GM12878 (cell line): ENCODE measurements at regions of chr2 and their contacts with region 1.

Region 1: DNA sequence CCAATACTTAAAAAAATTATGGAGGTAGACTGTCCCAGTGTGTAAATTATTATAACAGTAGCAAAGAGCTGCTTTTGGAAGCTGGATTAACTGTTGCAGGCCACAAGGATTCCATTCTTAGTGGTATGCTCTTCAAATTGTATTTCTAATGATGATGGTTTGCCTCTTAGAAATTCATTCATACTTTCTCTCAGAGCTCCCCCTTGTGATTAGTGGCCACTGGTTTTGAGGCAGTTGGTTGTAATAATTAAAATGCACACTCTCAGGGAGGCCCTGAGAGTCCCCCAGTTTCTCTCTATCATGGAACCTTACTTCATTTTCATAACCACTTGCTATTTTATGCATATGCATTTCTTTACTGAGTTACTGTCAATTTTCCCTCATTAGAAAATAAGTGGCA is 122.5 kb downstream of the PLA2R1 start:
- DNase-seq: peak; percentile 32
- ATAC-seq: peak; percentile 94
- H3K4me3 ChIP-seq: no peak overlapping the region
- H3K27ac ChIP-seq: no peak overlapping the region
- H3K4me1 ChIP-seq: 0 out of 2 replicates have a peak, but pooled peaks cover 1% of the 10 kb centered on the region
- H3K27me3 ChIP-seq: no peaks in the 10 kb centered on the region
- CTCF ChIP-seq: peak; percentile 57 to 82 (median 62); a peak in 5 of 6 replicates
- EP300 ChIP-seq: no peak
- POLR2A ChIP-seq: no peak
- RAD21 ChIP-seq: peak; percentile 88

Region 2: DNA sequence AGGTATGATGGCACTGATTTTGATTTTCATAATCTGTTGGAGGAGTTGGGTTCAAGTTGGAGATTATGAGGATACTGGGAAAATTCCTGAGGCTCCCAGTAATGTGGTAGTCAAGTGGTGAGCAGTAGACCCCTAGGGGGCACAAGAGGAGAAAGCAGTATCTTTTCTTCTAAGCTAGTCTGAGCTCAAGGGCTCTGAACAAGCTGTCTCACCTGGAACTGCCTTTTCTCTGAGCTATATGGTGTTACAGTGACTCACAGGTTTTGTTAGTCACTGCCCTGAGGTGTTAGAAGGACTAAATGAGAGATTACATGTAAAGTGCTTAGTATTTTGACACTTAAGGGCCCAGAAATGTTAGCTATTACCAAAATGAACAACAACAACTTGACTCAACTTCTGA is 184.2 kb before region 1 on chr2:
- CTCF ChIA-PET with region 1: interaction called, 10 read pairs
- POLR2A ChIA-PET with region 1: no interaction called
- RAD21 ChIA-PET with region 1: interaction called, 10 read pairs
- SMC1A ChIA-PET with region 1: interaction called, 7 read pairs
- in situ Hi-C with region 1: no loop called
- intact Hi-C with region 1: no loop called
- DNase-seq: no peak
- ATAC-seq: peak; percentile 65
- H3K4me3 ChIP-seq: no peak overlapping the region
- H3K27ac ChIP-seq: no peak overlapping the region
- H3K4me1 ChIP-seq: no peaks in the 10 kb centered on the region
- H3K27me3 ChIP-seq: no peaks in the 10 kb centered on the region
- CTCF ChIP-seq: peak in 1 of 3 experiments; percentile 17; a peak in 1 of 6 replicates
- EP300 ChIP-seq: no peak
- POLR2A ChIP-seq: no peak
- RAD21 ChIP-seq: no peak

Region 3: DNA sequence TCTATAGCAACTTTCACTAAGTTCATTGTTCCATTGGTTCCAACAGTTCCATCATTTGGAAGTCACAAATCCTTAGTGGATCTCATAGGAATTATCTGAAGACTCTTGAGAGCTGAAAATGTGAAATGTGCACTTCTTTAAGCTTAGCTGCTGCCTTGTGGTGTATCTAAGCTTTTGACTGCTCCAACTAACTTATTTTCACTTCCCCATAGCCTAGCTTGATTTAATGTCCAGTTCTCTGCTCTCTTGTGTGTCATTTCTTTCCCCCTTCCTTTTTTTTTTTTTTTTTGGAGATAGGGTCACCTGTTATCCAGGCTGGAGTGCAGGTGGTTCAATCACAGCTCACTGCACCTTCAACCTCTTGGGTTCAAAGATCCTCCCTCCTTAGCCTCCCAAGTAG is 107.1 kb before region 1 on chr2:
- CTCF ChIA-PET with region 1: interaction called, 4 read pairs
- POLR2A ChIA-PET with region 1: no interaction called
- RAD21 ChIA-PET with region 1: interaction called, 10 read pairs
- SMC1A ChIA-PET with region 1: interaction called, 6 read pairs
- in situ Hi-C with region 1: no loop called
- intact Hi-C with region 1: no loop called
- DNase-seq: no peak
- ATAC-seq: peak; percentile 68
- H3K4me3 ChIP-seq: no peak overlapping the region
- H3K27ac ChIP-seq: no peak overlapping the region
- H3K4me1 ChIP-seq: no peaks in the 10 kb centered on the region
- H3K27me3 ChIP-seq: no peaks in the 10 kb centered on the region
- CTCF ChIP-seq: no peak
- EP300 ChIP-seq: no peak
- POLR2A ChIP-seq: no peak
- RAD21 ChIP-seq: no peak

Region 4: GRCh38 chr2:159867567-159868361 is 72.2 kb before region 1 on chr2:
- CTCF ChIA-PET with region 1: interaction called, 3 read pairs
- POLR2A ChIA-PET with region 1: interaction called, 3 read pairs
- RAD21 ChIA-PET with region 1: interaction called, 5 read pairs
- SMC1A ChIA-PET with region 1: interaction called, 12 read pairs
- in situ Hi-C with region 1: no loop called
- intact Hi-C with region 1: loop called (anchors 5 kb)
- DNase-seq: no peak
- ATAC-seq: no peak
- H3K4me3 ChIP-seq: no peak overlapping the region
- H3K27ac ChIP-seq: no peak overlapping the region
- H3K4me1 ChIP-seq: no peaks in the 10 kb centered on the region
- H3K27me3 ChIP-seq: no peaks in the 10 kb centered on the region
- CTCF ChIP-seq: no peak
- EP300 ChIP-seq: no peak
- POLR2A ChIP-seq: no peak
- RAD21 ChIP-seq: no peak

Region 5: GRCh38 chr2:159904127-159904958 is 35.6 kb before region 1 on chr2:
- CTCF ChIA-PET with region 1: interaction called, 72 read pairs
- POLR2A ChIA-PET with region 1: interaction called, 840 read pairs
- RAD21 ChIA-PET with region 1: interaction called, 19 read pairs
- SMC1A ChIA-PET with region 1: interaction called, 1,536 read pairs
- in situ Hi-C with region 1: no loop called
- intact Hi-C with region 1: no loop called
- DNase-seq: no peak
- ATAC-seq: peak; percentile 82
- H3K4me3 ChIP-seq: peak within 1 kb of the TSS; percentile 94
- H3K27ac ChIP-seq: peak within 1 kb of the TSS; percentile 83
- H3K4me1 ChIP-seq: peaks cover 25% of the 10 kb centered on the region
- H3K27me3 ChIP-seq: no peaks in the 10 kb centered on the region
- CTCF ChIP-seq: 0 out of 6 replicates have a peak, but pooled peaks of 1 of the 3 experiments have one; percentile 0
- EP300 ChIP-seq: no peak
- POLR2A ChIP-seq: peak; percentile 93
- RAD21 ChIP-seq: no peak

Region 6: GRCh38 chr2:159968279-159968900 is 28.4 kb after region 1 on chr2:
- CTCF ChIA-PET with region 1: interaction called, 27 read pairs
- POLR2A ChIA-PET with region 1: interaction called, 3 read pairs
- RAD21 ChIA-PET with region 1: interaction called, 28 read pairs
- SMC1A ChIA-PET with region 1: interaction called, 15 read pairs
- in situ Hi-C with region 1: no loop called
- intact Hi-C with region 1: no loop called
- DNase-seq: no peak
- ATAC-seq: peak; percentile 66
- H3K4me3 ChIP-seq: no peak overlapping the region
- H3K27ac ChIP-seq: no peak overlapping the region
- H3K4me1 ChIP-seq: peaks cover 4% of the 10 kb centered on the region; the same call in 1 of the 2 replicates
- H3K27me3 ChIP-seq: no peaks in the 10 kb centered on the region
- CTCF ChIP-seq: peak; percentile 59 to 92 (median 67); a peak in 5 of 6 replicates
- EP300 ChIP-seq: no peak
- POLR2A ChIP-seq: no peak
- RAD21 ChIP-seq: peak; percentile 92